T-cell (primary cell): ENCODE measurements at regions of chr9 and their contacts with region 1.

Region 1: GRCh38 chr9:122904823-122905710 is at the start of gene RC3H2:
- DNase-seq: peak; percentile 89 to 99 (median 96)
- ATAC-seq: peak; percentile 89 to 96 (median 94)
- H3K4me3 ChIP-seq: peak within 1 kb of the TSS; percentile 76 to 81
- H3K4me3 Mint-ChIP-seq: peak within 1 kb of the TSS; percentile 88 to 92 (median 91)
- H3K27ac ChIP-seq: peak within 1 kb of the TSS; percentile 86
- H3K27ac Mint-ChIP-seq: peak within 1 kb of the TSS; percentile 93 to 97
- H3K4me1 ChIP-seq: peaks cover 17 to 18% of the 10 kb centered on the region in 2 experiments
- H3K4me1 Mint-ChIP-seq: peaks cover 18 to 45% (median 31%) of the 10 kb centered on the region in 3 donors
- H3K27me3 ChIP-seq: no peaks in the 10 kb centered on the region
- H3K27me3 Mint-ChIP-seq: no peaks in the 10 kb centered on the region
- total RNA-seq, gene RC3H2: 45.3 to 76.0 (median 59.8) TPM

Region 2: GRCh38 chr9:122940603-122941559 is 35.8 kb after region 1 on chr9 and contains the start of gene RABGAP1:
- CTCF ChIA-PET with region 1: interaction called in 1 of 2 experiments, 4 read pairs
- POLR2A ChIA-PET with region 1: interaction called in 1 of 2 experiments, 23 read pairs
- DNase-seq: peak; percentile 93 to 99 (median 98)
- ATAC-seq: peak; percentile 97 to 100 (median 99)
- H3K4me3 ChIP-seq: peak within 1 kb of the TSS; percentile 88 to 95
- H3K4me3 Mint-ChIP-seq: peak within 1 kb of the TSS; percentile 91 to 97 (median 95)
- H3K27ac ChIP-seq: peak within 1 kb of the TSS; percentile 75
- H3K27ac Mint-ChIP-seq: peak within 1 kb of the TSS; percentile 86 to 90
- H3K4me1 ChIP-seq: peaks cover 10 to 16% of the 10 kb centered on the region in 2 experiments
- H3K4me1 Mint-ChIP-seq: peaks cover 33 to 42% (median 39%) of the 10 kb centered on the region in 3 donors
- H3K27me3 ChIP-seq: no peaks in the 10 kb centered on the region
- H3K27me3 Mint-ChIP-seq: no peaks in the 10 kb centered on the region
- total RNA-seq, gene RABGAP1: 35.7 to 42.0 (median 37.7) TPM

Region 3: DNA sequence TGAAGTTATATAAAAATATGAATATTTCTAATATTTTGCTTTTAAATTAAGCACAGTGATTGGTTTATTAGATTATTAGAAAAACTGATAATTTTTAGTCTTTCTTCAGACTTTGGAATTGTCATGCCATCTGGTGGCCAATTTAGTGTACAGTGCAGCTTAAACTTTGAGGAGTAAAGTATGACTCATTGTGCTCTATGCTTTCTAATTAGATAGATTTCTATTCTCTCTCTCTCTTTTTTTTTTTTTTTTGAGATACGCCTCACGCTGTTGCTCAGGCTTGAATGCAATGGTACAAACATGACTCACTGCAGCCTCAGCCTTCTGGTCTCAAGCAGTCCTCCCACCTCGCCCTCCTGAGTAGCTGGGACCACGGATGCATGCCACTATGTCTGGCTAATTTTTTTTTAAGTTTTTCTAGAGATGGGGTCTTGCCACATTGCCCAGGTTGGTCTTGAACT is 86.3 kb after region 1 on chr9:
- CTCF ChIA-PET with region 1: interaction called, 3 to 11 read pairs
- POLR2A ChIA-PET with region 1: no interaction called
- DNase-seq: peak in 15 of 35 experiments; percentile 0 to 64 (median 6)
- ATAC-seq: peak; percentile 55 to 80 (median 63)
- H3K4me3 ChIP-seq: no peak overlapping the region
- H3K4me3 Mint-ChIP-seq: no peak overlapping the region
- H3K27ac ChIP-seq: no peak overlapping the region
- H3K27ac Mint-ChIP-seq: no peak overlapping the region
- H3K4me1 ChIP-seq: no peaks in the 10 kb centered on the region
- H3K4me1 Mint-ChIP-seq: peaks cover 0 to 7% (median 2%) of the 10 kb centered on the region in 3 donors
- H3K27me3 ChIP-seq: no peaks in the 10 kb centered on the region
- H3K27me3 Mint-ChIP-seq: no peaks in the 10 kb centered on the region